Cardiac septum (tissue), 1 donor: ENCODE measurements at regions of chr1 and their contacts with region 1.

Region 1: DNA sequence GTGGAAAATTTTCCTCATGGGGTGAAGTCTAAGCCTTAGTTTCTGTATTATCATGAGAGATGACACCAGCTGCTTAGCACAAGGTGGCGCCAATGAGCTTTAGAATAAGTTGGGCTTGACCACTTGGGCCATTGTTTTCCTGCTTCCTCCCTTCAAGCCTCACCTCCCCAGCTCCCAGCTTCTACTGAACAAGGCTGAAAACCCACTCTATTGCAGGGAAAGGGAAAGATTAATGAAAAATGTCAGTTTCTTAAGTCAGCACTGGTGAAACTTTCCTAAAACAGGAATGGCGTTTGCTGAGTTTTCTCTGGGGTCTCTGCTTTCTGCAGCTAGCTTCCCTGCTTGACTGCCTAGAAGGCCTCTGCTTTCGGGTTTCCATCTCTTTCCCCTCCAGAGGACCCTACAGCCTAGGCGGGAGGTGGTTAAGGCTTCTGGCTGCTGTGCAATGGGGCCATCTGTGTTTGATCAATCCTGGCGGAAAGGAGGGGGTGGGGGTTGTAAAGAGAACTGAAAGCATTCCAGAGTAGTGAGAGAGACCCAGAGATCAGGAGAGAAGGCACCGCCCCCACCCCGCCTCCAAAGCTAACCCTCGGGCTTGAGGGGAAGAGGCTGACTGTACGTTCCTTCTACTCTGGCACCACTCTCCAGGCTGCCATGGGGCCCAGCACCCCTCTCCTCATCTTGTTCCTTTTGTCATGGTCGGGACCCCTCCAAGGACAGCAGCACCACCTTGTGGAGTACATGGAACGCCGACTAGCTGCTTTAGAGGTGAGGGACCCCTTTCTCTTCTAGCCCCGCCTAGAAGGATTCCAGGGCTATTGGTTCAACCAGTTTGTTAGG is at the start of gene OLFML3:
- DNase-seq: no peak
- total RNA-seq, gene OLFML3: 8.2 TPM

Region 2: GRCh38 chr1:114219172-114219868 is 240.2 kb after region 1 on chr1:
- intact Hi-C with region 1: loop called (anchors 5 kb)
- DNase-seq: no peak

Region 3: DNA sequence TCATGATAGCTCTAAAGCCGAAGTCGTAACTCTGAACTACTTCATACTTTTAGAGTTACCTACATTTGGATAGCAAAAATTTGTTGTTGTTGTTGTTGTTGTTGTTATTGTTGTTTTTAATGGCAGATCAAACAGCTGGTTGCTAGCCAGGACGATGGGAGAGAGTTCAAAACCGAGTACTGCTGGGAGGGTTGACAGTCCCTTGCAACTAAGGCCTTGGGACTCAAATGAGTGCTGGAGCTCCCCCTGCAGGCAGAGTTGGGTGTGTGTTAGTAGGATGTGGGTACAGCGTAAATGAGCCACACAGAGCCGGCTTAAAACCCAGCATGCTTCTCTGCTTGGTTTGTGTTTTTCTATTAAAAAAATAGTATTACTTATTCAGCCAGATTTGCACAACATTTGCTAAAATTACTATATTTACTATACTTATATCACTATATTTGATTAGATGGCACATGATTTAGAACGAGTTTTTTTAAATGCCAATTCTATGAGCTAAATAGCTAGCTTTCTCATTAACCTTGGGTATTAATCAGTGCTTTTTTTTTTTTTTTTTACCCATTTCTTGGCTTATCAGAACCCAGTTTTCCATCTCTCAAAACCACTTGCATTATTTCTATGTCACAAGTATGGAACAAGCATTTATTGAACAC is 303.8 kb after region 1 on chr1:
- intact Hi-C with region 1: loop called (anchors 1 kb)
- DNase-seq: peak; percentile 91

Region 4: GRCh38 chr1:114558544-114558943 is 579.5 kb after region 1 on chr1:
- intact Hi-C with region 1: loop called (anchors 10 kb)
- DNase-seq: no peak